ENCODE measurements at regions of chr3 and their contacts with region 1.

Region 1: GRCh38 chr3:149527531-149528339 is 53.2 kb downstream of the TM4SF4 start:
- DNase-seq: peak; percentile 85
- H3K4me3 ChIP-seq: no peak overlapping the region
- H3K27ac ChIP-seq: peak overlapping the region; percentile 62
- H3K4me1 ChIP-seq: peaks cover 43% of the 10 kb centered on the region
- H3K27me3 ChIP-seq: no peaks in the 10 kb centered on the region
- CTCF ChIP-seq: peak in 1 of 2 donors; percentile 50
- POLR2A ChIP-seq: no peak

Region 2: GRCh38 chr3:149377408-149378377 is 150.0 kb before region 1 on chr3 and contains the start of gene TM4SF1:
- CTCF ChIA-PET with region 1: no interaction called
- POLR2A ChIA-PET with region 1: no interaction called
- dilution Hi-C with region 1: no loop called
- intact Hi-C with region 1: no loop called
- DNase-seq: peak; percentile 100
- H3K4me3 ChIP-seq: peak within 1 kb of the TSS; percentile 81 to 98 (median 93)
- H3K27ac ChIP-seq: peak within 1 kb of the TSS; percentile 90
- H3K4me1 ChIP-seq: peaks cover 45% of the 10 kb centered on the region
- H3K27me3 ChIP-seq: no peaks in the 10 kb centered on the region
- CTCF ChIP-seq: peak in 1 of 2 donors; percentile 4
- POLR2A ChIP-seq: peak; percentile 100
- total RNA-seq, gene TM4SF1: 559 and 619 TPM in 2 replicates

Region 3: GRCh38 chr3:149435996-149436885 is 91.5 kb before region 1 on chr3:
- CTCF ChIA-PET with region 1: no interaction called
- POLR2A ChIA-PET with region 1: no interaction called
- dilution Hi-C with region 1: no loop called
- intact Hi-C with region 1: no loop called
- DNase-seq: no peak
- H3K4me3 ChIP-seq: no peak overlapping the region
- H3K27ac ChIP-seq: no peak overlapping the region
- H3K4me1 ChIP-seq: no peaks in the 10 kb centered on the region
- H3K27me3 ChIP-seq: no peaks in the 10 kb centered on the region
- CTCF ChIP-seq: no peak
- POLR2A ChIP-seq: no peak

Region 4: DNA sequence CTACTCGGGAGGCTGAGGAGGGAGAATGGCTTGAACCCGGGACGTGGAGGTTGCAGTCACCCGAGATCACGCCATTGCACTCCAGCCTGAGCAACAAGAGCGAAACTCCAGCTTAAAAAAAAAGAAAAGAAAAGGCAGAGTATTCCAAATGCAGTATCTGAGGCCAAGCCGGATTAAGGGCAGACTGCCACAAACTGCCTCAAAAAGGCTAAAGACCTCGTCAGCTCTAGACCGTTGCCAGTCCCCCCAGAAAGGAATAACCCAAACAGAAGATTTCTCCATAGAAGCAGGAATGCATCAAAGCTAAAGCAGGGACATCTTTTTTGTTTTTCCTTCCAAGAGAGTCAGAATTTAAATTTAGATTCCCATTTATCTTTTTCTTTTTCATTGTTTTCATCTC is 19.7 kb after region 1 on chr3:
- CTCF ChIA-PET with region 1: interaction called, 13 read pairs
- POLR2A ChIA-PET with region 1: no interaction called
- dilution Hi-C with region 1: no loop called
- intact Hi-C with region 1: no loop called
- DNase-seq: no peak
- H3K4me3 ChIP-seq: no peak overlapping the region
- H3K27ac ChIP-seq: no peak overlapping the region
- H3K4me1 ChIP-seq: peaks cover 52% of the 10 kb centered on the region
- H3K27me3 ChIP-seq: no peaks in the 10 kb centered on the region
- CTCF ChIP-seq: no peak
- POLR2A ChIP-seq: no peak

Region 5: DNA sequence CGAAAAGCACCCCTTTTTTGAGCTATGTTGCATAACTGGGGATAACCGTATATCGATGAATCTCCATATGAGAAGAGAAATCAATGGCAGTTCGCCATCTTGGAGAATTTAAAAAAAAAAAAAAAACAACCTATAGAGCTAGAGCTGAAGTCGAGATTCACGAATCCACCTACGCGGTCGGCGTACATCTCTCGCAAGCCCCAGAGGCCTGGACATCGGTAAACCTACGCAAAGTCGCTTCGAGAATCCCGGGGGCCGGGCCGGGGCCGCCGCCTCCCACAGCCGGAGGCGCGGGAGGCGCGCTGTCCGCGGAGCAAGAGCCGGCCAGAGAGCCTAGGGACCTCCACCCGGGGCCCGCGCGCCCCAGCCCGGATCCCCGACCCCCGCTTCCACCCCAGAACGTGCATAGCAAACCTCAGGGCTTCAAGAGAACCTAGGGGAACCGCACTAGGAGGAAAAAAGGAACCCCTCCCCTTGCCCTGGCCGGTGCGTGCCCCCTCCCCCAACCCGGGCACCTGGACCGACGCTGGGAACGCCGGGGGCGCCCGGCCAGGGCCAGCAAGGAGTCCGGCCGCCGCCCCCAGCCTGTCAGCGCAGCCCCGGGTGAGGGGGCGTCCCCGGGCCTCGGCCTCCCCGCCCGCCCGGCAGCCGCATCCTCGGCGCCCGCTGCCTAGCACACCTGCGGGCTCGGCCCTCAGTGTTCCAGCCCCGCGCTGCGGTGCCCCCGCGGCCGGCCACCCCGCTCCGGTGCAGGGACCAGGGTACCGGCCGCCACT is 442.4 kb after region 1 on chr3:
- CTCF ChIA-PET with region 1: no interaction called
- POLR2A ChIA-PET with region 1: no interaction called
- dilution Hi-C with region 1: no loop called
- intact Hi-C with region 1: no loop called
- DNase-seq: peak; percentile 90
- H3K4me3 ChIP-seq: peak overlapping the region; percentile 65 to 92 (median 88)
- H3K27ac ChIP-seq: peak overlapping the region; percentile 94
- H3K4me1 ChIP-seq: peaks cover 27% of the 10 kb centered on the region
- H3K27me3 ChIP-seq: peaks cover 0 to 3% of the 10 kb centered on the region in 2 experiments
- CTCF ChIP-seq: no peak
- POLR2A ChIP-seq: peak; percentile 30